Activated naive CD4-positive, alpha-beta T cell treated with anti-CD3 and anti-CD28 coated beads, Interleukin-2, amount 10 ng/mL, durations not matched to agents 7 days and 5 days (primary cell): ENCODE measurements at regions of chr20 and their contacts with region 1.

Region 1: GRCh38 chr20:49132995-49133478 is 55.1 kb downstream of the STAU1 start:
- DNase-seq: no peak
- H3K4me3 Mint-ChIP-seq: no peak overlapping the region
- H3K27ac Mint-ChIP-seq: no peak overlapping the region
- H3K4me1 Mint-ChIP-seq: peaks cover 3% of the 10 kb centered on the region
- H3K27me3 Mint-ChIP-seq: no peaks in the 10 kb centered on the region

Region 2: GRCh38 chr20:48970551-48971365 is 162.3 kb before region 1 on chr20:
- CTCF ChIA-PET with region 1: no interaction called
- DNase-seq: no peak
- H3K4me3 Mint-ChIP-seq: no peak overlapping the region
- H3K27ac Mint-ChIP-seq: no peak overlapping the region
- H3K4me1 Mint-ChIP-seq: no peaks in the 10 kb centered on the region
- H3K27me3 Mint-ChIP-seq: no peaks in the 10 kb centered on the region

Region 3: GRCh38 chr20:49179368-49180277 is 46.6 kb after region 1 on chr20:
- CTCF ChIA-PET with region 1: interaction called, 18 read pairs
- DNase-seq: no peak
- H3K4me3 Mint-ChIP-seq: no peak overlapping the region
- H3K27ac Mint-ChIP-seq: peak overlapping the region; percentile 11
- H3K4me1 Mint-ChIP-seq: peaks cover 44% of the 10 kb centered on the region
- H3K27me3 Mint-ChIP-seq: no peaks in the 10 kb centered on the region